Activated CD4-positive, alpha-beta memory T cell treated with anti-CD3 and anti-CD28 coated beads for 36 hours (primary cell): ENCODE measurements at regions of chr1 and their contacts with region 1.

Region 1: GRCh38 chr1:203603940-203604591 is 22.6 kb upstream of the ATP2B4 start:
- DNase-seq: no peak
- H3K4me3 Mint-ChIP-seq: no peak overlapping the region
- H3K27ac Mint-ChIP-seq: no peak overlapping the region
- H3K4me1 Mint-ChIP-seq: peaks cover 39% of the 10 kb centered on the region
- H3K27me3 Mint-ChIP-seq: no peaks in the 10 kb centered on the region

Region 2: GRCh38 chr1:203593723-203594122 is 10.3 kb before region 1 on chr1:
- CTCF ChIA-PET with region 1: interaction called, 10 read pairs
- POLR2A ChIA-PET with region 1: no interaction called
- intact Hi-C with region 1: no loop called
- DNase-seq: peak; percentile 76
- H3K4me3 Mint-ChIP-seq: no peak overlapping the region
- H3K27ac Mint-ChIP-seq: peak overlapping the region; percentile 4
- H3K4me1 Mint-ChIP-seq: peaks cover 15% of the 10 kb centered on the region
- H3K27me3 Mint-ChIP-seq: no peaks in the 10 kb centered on the region